Dorsolateral prefrontal cortex (tissue), 120 donors: ENCODE measurements at regions of chr11 and their contacts with region 1.

Region 1: GRCh38 chr11:14249121-14249963 is 109.6 kb downstream of the RRAS2 start:
- DNase-seq: peak in 9 of 10 donors; percentile 39 to 81 (median 57)
- H3K4me3 ChIP-seq: peak overlapping the region in 28 of 59 donors; percentile 2 to 47 (median 20)
- H3K27ac ChIP-seq: peak overlapping the region in 21 of 59 donors; percentile 4 to 75 (median 45)
- H3K27me3 ChIP-seq: peaks cover 0 to 23% (median 0%) of the 10 kb centered on the region in 45 donors
- CTCF ChIP-seq: peak; percentile 77 to 99 (median 91)

Region 2: DNA sequence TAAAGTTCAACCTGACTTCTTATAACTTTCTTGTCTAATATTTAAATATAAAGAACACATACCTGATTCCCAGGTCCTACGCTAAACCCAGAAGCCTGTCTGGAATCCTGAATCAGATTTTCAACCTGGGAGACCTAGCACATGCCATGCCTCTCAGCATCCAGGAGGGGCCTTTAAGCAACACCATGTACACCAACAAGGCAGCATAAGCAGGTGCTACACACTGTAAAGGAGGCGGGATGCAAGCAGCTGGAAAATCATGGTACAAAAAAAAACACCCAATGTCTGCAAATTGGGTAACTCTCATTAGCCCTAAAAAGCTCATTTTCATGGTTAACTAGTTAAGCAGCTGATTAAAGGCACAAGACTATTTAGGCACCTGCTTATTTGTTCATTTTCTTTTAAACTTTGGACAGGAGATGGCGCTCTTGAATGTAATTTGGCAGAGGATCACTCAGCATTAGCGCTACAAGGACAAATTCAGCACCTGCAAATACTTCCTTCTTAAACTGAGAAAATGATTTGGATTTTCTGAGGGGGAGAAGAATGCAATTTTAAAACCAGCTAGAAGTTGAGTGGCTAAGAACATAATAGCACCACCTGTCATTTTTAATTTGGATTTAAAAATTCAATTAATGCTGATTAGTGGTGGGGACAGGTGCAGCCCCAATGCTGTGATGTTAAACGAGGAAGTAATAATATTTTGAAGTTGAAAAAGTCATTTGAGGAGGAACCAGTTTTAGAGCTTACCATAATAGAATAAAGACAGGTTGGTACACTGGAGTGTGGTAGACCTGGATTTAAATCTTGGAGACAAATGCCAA is 476.9 kb before region 1 on chr11:
- intact Hi-C with region 1: loop called (anchors 2 to 5 kb)
- DNase-seq: peak in 1 of 10 donors; percentile 27
- H3K4me3 ChIP-seq: no peak overlapping the region
- H3K27ac ChIP-seq: no peak overlapping the region
- H3K27me3 ChIP-seq: peaks cover 0 to 3% (median 0%) of the 10 kb centered on the region in 45 donors
- CTCF ChIP-seq: peak in 55 of 56 donors; percentile 28 to 85 (median 61)

Region 3: GRCh38 chr11:13955971-13956421 is 293.3 kb before region 1 on chr11:
- intact Hi-C with region 1: loop called (anchors 2 kb)
- DNase-seq: peak in 8 of 10 donors; percentile 23 to 67 (median 54)
- H3K4me3 ChIP-seq: no peak overlapping the region
- H3K27ac ChIP-seq: no peak overlapping the region
- H3K27me3 ChIP-seq: peaks cover 0 to 13% (median 0%) of the 10 kb centered on the region in 45 donors
- CTCF ChIP-seq: peak; percentile 72 to 98 (median 88)

Region 4: GRCh38 chr11:13962562-13963168 is 286.7 kb before region 1 on chr11 and contains the start of gene SPON1:
- intact Hi-C with region 1: loop called (anchors 2 kb)
- DNase-seq: peak in 5 of 10 donors; percentile 36 to 62 (median 51)
- H3K4me3 ChIP-seq: peak within 1 kb of the TSS; percentile 25 to 67 (median 54)
- H3K27ac ChIP-seq: peak within 1 kb of the TSS in 32 of 59 donors; percentile 4 to 75 (median 38)
- H3K27me3 ChIP-seq: peaks cover 0 to 55% (median 34%) of the 10 kb centered on the region in 45 donors
- CTCF ChIP-seq: peak in 2 of 56 donors; percentile 5 to 7
- total RNA-seq, gene SPON1: 15.4 to 89.4 (median 39.1) TPM